ENCODE measurements at regions of chr18 and their contacts with region 1.

Region 1: GRCh38 chr18:74935434-74935833 is 273.5 kb downstream of the PTGR3 start:
- DNase-seq: no peak
- ATAC-seq: no peak
- H3K4me3 ChIP-seq: no peak overlapping the region
- H3K27ac ChIP-seq: no peak overlapping the region
- H3K4me1 ChIP-seq: no peaks in the 10 kb centered on the region
- H3K27me3 ChIP-seq: no peaks in the 10 kb centered on the region
- CTCF ChIP-seq: no peak

Region 2: DNA sequence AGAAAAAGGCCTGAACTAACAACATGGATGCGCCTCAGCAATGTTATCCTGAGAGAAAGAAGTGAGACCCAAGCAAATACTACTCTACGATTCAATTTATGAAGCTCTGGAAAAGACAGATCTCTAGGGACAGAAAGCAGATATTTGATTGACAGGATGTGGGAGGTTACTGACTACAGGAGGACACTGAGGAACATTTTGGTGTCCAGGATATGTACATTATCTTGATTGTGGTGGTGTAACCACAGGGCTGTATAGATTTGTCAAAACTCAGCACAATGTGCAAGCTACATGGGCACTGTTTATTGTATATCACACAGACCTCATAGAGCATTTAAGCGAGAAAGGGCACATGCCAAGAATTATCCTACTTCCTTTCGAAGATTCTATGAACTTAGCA is 53.7 kb after region 1 on chr18:
- intact Hi-C with region 1: loop called in 1 of 2 experiments (anchors 5 kb)
- DNase-seq: no peak
- ATAC-seq: no peak
- H3K4me3 ChIP-seq: no peak overlapping the region
- H3K27ac ChIP-seq: no peak overlapping the region
- H3K4me1 ChIP-seq: no peaks in the 10 kb centered on the region
- H3K27me3 ChIP-seq: no peaks in the 10 kb centered on the region
- CTCF ChIP-seq: no peak

Measured in psoas muscle (tissue), 8 donors.